Heart left ventricle (tissue), 16 donors: ENCODE measurements at regions of chrX and their contacts with region 1.

Region 1: GRCh38 chrX:63560601-63561218 is 209.6 kb upstream of the SPIN4 start:
- DNase-seq: peak; percentile 37 to 61 (median 57)
- ATAC-seq: peak; percentile 91 to 99 (median 98)
- H3K4me3 ChIP-seq: peak overlapping the region; percentile 9 to 81 (median 66)
- H3K27ac ChIP-seq: peak overlapping the region in 11 of 12 donors; percentile 9 to 77 (median 65)
- H3K4me1 ChIP-seq: peaks cover 0 to 14% (median 0%) of the 10 kb centered on the region in 12 donors
- H3K27me3 ChIP-seq: no peaks in the 10 kb centered on the region
- CTCF ChIP-seq: no peak
- POLR2A ChIP-seq: no peak

Region 2: GRCh38 chrX:63581398-63581797 is 20.7 kb after region 1 on chrX:
- intact Hi-C with region 1: no loop called
- DNase-seq: no peak
- ATAC-seq: no peak
- H3K4me3 ChIP-seq: no peak overlapping the region
- H3K27ac ChIP-seq: no peak overlapping the region
- H3K4me1 ChIP-seq: no peaks in the 10 kb centered on the region
- H3K27me3 ChIP-seq: no peaks in the 10 kb centered on the region
- CTCF ChIP-seq: no peak
- POLR2A ChIP-seq: no peak

Region 3: GRCh38 chrX:63754860-63755582 is 194.3 kb after region 1 on chrX:
- intact Hi-C with region 1: loop called in 1 of 10 experiments (anchors 10 kb)
- DNase-seq: peak; percentile 91 to 95 (median 94)
- ATAC-seq: peak; percentile 97 to 99 (median 98)
- H3K4me3 ChIP-seq: peak overlapping the region; percentile 8 to 89 (median 68)
- H3K27ac ChIP-seq: peak overlapping the region; percentile 67 to 96 (median 90)
- H3K4me1 ChIP-seq: peaks cover 0 to 27% (median 4%) of the 10 kb centered on the region in 12 donors
- H3K27me3 ChIP-seq: peaks cover 0 to 4% (median 0%) of the 10 kb centered on the region in 9 donors
- CTCF ChIP-seq: no peak
- POLR2A ChIP-seq: peak; percentile 27 to 84